IMR-90 (cell line): ENCODE measurements at regions of chr14 and their contacts with region 1.

Region 1: GRCh38 chr14:78902010-78902623 is 731.9 kb downstream of the NRXN3 start:
- DNase-seq: peak; percentile 54
- ATAC-seq: peak; percentile 76
- H3K4me3 ChIP-seq: no peak overlapping the region
- H3K27ac ChIP-seq: no peak overlapping the region
- H3K4me1 ChIP-seq: no peaks in the 10 kb centered on the region
- H3K27me3 ChIP-seq: peaks cover 1% of the 10 kb centered on the region; the same call in 1 of the 2 replicates
- CTCF ChIP-seq: peak; percentile 65
- POLR2A ChIP-seq: no peak
- RAD21 ChIP-seq: no peak; the same call in 1 of the 2 replicates

Region 2: GRCh38 chr14:78278464-78279250 is 623.5 kb before region 1 on chr14:
- CTCF ChIA-PET with region 1: no interaction called
- POLR2A ChIA-PET with region 1: no interaction called
- dilution Hi-C with region 1: no loop called
- in situ Hi-C with region 1: no loop called
- intact Hi-C with region 1: no loop called
- DNase-seq: no peak
- ATAC-seq: no peak
- H3K4me3 ChIP-seq: no peak overlapping the region
- H3K27ac ChIP-seq: no peak overlapping the region
- H3K4me1 ChIP-seq: no peaks in the 10 kb centered on the region
- H3K27me3 ChIP-seq: no peaks in the 10 kb centered on the region
- CTCF ChIP-seq: no peak
- POLR2A ChIP-seq: no peak
- RAD21 ChIP-seq: no peak

Region 3: DNA sequence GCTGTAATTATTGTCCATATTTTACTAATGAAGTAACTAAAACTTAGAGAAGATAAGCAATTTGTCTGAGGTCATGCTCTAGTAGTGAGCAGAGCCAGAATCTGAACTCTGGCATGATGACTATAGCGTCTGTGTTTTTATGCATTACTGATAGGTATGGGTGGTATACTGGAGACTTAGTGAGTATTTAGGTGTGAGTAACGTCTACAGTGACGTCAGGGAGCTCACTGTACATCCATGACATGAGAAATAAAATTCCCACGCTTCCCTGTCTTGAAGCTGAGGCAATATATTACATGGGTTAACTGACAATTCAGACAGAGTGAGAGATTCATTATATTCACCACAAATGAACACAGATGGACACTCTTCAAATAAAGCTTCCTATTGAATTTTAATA is 10.9 kb before region 1 on chr14:
- CTCF ChIA-PET with region 1: interaction called, 10 read pairs
- POLR2A ChIA-PET with region 1: no interaction called
- dilution Hi-C with region 1: no loop called
- in situ Hi-C with region 1: no loop called
- intact Hi-C with region 1: no loop called
- DNase-seq: no peak
- ATAC-seq: no peak
- H3K4me3 ChIP-seq: no peak overlapping the region
- H3K27ac ChIP-seq: no peak overlapping the region
- H3K4me1 ChIP-seq: no peaks in the 10 kb centered on the region
- H3K27me3 ChIP-seq: no peaks in the 10 kb centered on the region
- CTCF ChIP-seq: no peak
- POLR2A ChIP-seq: no peak
- RAD21 ChIP-seq: no peak